Common myeloid progenitor, CD34-positive (primary cell): ENCODE measurements at regions of chr9 and their contacts with region 1.

Region 1: GRCh38 chr9:97982683-97983588 is at the start of gene ANP32B:
- DNase-seq: peak; percentile 92 to 98 (median 96)
- H3K4me3 ChIP-seq: peak within 1 kb of the TSS; percentile 69 to 92 (median 83)
- H3K27ac ChIP-seq: peak within 1 kb of the TSS; percentile 85 to 93
- H3K4me1 ChIP-seq: peaks cover 14 to 74% (median 56%) of the 10 kb centered on the region in 4 experiments
- H3K27me3 ChIP-seq: no peaks in the 10 kb centered on the region

Region 2: DNA sequence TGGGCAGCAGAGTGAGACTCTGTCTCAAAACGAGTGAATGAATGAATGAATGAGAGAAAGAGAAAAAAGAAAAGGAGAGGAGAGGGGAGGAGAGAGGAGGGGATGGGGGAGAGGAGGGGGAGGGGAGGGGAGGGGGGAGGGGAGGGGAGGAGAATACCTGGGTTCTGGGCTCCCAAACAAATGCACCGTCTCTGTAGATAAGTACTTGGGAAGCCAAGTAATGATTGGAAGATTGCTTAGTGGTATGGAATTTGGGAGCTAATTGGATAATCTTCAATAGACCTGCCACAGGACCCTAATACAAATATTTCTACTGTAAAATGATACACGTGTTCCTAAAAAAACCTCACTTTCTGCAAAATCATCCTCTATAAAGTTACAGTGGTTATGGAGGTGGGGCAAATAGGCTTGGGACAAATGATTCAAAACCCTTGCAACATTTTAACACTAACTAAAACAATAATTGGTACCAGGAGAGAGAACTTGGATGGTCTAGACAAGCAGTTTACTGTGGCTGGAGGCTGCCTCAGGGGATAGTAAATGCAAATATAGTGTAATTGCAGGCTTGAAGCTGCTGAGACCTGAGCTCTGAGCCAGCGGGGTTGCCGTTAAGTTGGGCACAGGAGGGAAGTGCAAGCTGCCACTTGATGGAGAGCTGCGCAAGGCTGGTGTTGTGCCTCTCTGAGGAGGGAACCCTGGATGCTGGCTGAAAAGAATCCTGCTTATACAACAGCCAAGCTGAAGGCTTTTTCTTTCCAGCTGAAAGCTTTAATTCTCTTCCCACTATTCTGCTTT is 48.4 kb before region 1 on chr9:
- CTCF ChIA-PET with region 1: interaction called, 11 read pairs
- POLR2A ChIA-PET with region 1: interaction called, 3 read pairs
- DNase-seq: peak in 2 of 3 donors; percentile 61 to 71
- H3K4me3 ChIP-seq: peak overlapping the region in 6 of 7 experiments; percentile 27 to 69 (median 48)
- H3K27ac ChIP-seq: peak overlapping the region; percentile 51 to 92
- H3K4me1 ChIP-seq: peaks cover 47 to 91% (median 75%) of the 10 kb centered on the region in 4 experiments
- H3K27me3 ChIP-seq: no peaks in the 10 kb centered on the region

Region 3: GRCh38 chr9:97943308-97943855 is 39.6 kb before region 1 on chr9:
- CTCF ChIA-PET with region 1: interaction called, 13 read pairs
- POLR2A ChIA-PET with region 1: interaction called, 4 read pairs
- DNase-seq: peak in 2 of 3 donors; percentile 59 to 81
- H3K4me3 ChIP-seq: peak overlapping the region in 1 of 7 experiments; percentile 2
- H3K27ac ChIP-seq: peak overlapping the region; percentile 35 to 92
- H3K4me1 ChIP-seq: peaks cover 42 to 64% (median 60%) of the 10 kb centered on the region in 4 experiments
- H3K27me3 ChIP-seq: no peaks in the 10 kb centered on the region

Region 4: GRCh38 chr9:97954550-97954989 is 28.4 kb before region 1 on chr9:
- CTCF ChIA-PET with region 1: interaction called, 64 read pairs
- POLR2A ChIA-PET with region 1: interaction called, 3 read pairs
- DNase-seq: peak; percentile 74 to 77 (median 76)
- H3K4me3 ChIP-seq: no peak overlapping the region
- H3K27ac ChIP-seq: peak overlapping the region in 1 of 2 experiments; percentile 6
- H3K4me1 ChIP-seq: peaks cover 0 to 21% (median 13%) of the 10 kb centered on the region in 4 experiments
- H3K27me3 ChIP-seq: no peaks in the 10 kb centered on the region

Region 5: GRCh38 chr9:97970165-97970564 is 12.8 kb before region 1 on chr9:
- CTCF ChIA-PET with region 1: interaction called, 64 read pairs
- POLR2A ChIA-PET with region 1: interaction called, 5 read pairs
- DNase-seq: peak in 2 of 3 donors; percentile 63 to 73
- H3K4me3 ChIP-seq: peak overlapping the region in 2 of 7 experiments; percentile 35 to 42
- H3K27ac ChIP-seq: no peak overlapping the region
- H3K4me1 ChIP-seq: peaks cover 8 to 27% (median 14%) of the 10 kb centered on the region in 4 experiments
- H3K27me3 ChIP-seq: no peaks in the 10 kb centered on the region

Region 6: GRCh38 chr9:97997330-97998276 is 14.7 kb after region 1 on chr9:
- CTCF ChIA-PET with region 1: interaction called, 11 read pairs
- POLR2A ChIA-PET with region 1: interaction called, 5 read pairs
- DNase-seq: no peak
- H3K4me3 ChIP-seq: no peak overlapping the region
- H3K27ac ChIP-seq: peak overlapping the region in 1 of 2 experiments; percentile 36
- H3K4me1 ChIP-seq: peaks cover 14 to 21% (median 15%) of the 10 kb centered on the region in 4 experiments
- H3K27me3 ChIP-seq: no peaks in the 10 kb centered on the region

Region 7: GRCh38 chr9:98158071-98158831 is 175.3 kb after region 1 on chr9:
- CTCF ChIA-PET with region 1: no interaction called
- POLR2A ChIA-PET with region 1: no interaction called
- DNase-seq: peak in 2 of 3 donors; percentile 28 to 41
- H3K4me3 ChIP-seq: no peak overlapping the region
- H3K27ac ChIP-seq: no peak overlapping the region
- H3K4me1 ChIP-seq: no peaks in the 10 kb centered on the region
- H3K27me3 ChIP-seq: no peaks in the 10 kb centered on the region